ENCODE measurements at regions of chr17 and their contacts with region 1.

Region 1: GRCh38 chr17:18141210-18141803 is 32.8 kb downstream of the MYO15A start:
- DNase-seq: peak in 1 of 2 experiments; percentile 58
- H3K4me3 ChIP-seq: no peak overlapping the region
- H3K27ac ChIP-seq: no peak overlapping the region
- H3K4me1 ChIP-seq: peaks cover 0 to 16% (median 6%) of the 10 kb centered on the region in 4 experiments; a peak in 5 of 7 replicates
- H3K27me3 ChIP-seq: no peaks in the 10 kb centered on the region; a peak in 3 of 7 replicates
- CTCF ChIP-seq: peak in 2 of 3 experiments; percentile 17 to 56; a peak in 3 of 4 replicates
- EP300 ChIP-seq: no peak
- POLR2A ChIP-seq: no peak
- RAD21 ChIP-seq: peak; percentile 50 to 51

Region 2: DNA sequence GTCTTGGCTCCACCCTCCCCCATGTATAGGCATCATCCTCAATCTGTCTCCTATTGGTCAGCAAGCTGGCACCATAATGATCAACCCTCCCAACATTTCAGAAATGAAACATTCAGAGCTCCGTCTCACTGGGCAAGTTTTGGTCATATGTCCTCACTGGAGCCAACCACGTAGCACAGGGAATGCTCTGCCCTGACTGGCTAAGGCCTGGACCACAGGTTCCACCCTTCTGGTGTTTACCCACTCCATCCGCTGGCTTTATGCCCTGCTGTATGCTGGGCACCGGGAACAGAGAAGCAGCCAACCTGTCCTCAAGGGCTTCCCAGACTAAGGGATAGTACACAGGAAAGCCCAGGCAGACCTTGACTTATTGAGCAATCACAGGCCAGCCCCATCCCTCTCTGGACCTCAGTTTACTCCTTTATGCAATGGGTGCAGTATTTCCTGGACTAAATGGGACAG is 12.2 kb before region 1 on chr17:
- CTCF ChIA-PET with region 1: interaction called, 50 read pairs
- POLR2A ChIA-PET with region 1: interaction called, 3 read pairs
- DNase-seq: no peak
- H3K4me3 ChIP-seq: no peak overlapping the region
- H3K27ac ChIP-seq: no peak overlapping the region
- H3K4me1 ChIP-seq: no peaks in the 10 kb centered on the region; a peak in 1 of 7 replicates
- H3K27me3 ChIP-seq: peaks cover 0 to 3% (median 2%) of the 10 kb centered on the region in 4 experiments; a peak in 4 of 7 replicates
- CTCF ChIP-seq: no peak
- EP300 ChIP-seq: no peak
- POLR2A ChIP-seq: no peak
- RAD21 ChIP-seq: no peak

Region 3: DNA sequence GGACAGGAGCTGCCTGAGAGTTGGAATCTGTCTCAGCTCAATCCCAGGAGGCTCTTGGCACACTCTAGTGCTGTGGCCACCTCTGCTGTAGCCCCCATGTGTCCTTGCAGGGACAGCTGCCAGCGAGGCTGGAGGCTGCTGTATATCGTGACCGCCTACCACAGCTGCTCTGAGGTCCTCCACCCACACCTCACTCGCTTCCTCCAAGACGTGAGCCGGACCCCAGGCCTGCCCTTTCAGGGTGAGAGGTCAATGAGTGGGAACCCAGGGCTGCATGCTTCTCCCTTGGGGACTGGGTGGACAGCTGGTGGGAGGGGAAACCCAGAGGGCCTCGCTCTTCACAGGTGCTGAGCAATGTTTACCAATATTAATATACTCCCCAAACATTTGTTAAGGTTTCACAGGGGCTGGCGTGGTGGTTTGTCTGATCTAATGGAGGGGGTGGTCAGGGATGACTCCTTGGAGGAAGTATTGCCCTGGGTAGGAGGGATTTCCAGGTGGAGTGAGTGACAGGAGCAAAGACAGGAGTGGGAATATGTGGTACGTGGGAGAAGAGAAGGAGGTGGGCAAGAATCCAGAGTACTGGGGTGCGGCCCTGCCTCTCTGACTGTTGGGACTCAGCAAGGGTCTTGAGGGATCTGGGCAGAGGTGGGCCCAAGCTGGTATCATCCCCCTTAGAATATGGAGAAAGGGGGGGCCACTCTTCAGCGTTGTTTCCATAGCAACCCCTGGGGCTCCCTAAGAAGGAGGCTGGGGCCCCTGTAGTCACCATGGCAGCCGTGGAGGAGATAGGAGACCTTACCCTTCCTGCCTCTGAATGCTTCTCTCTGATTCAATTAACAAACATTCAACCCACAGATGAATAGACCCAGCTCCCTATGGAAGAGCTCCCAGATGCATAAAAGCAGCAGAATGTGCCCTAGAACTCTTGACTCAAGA is 20.2 kb after region 1 on chr17:
- CTCF ChIA-PET with region 1: interaction called, 141 read pairs
- POLR2A ChIA-PET with region 1: no interaction called
- DNase-seq: no peak
- H3K4me3 ChIP-seq: no peak overlapping the region
- H3K27ac ChIP-seq: no peak overlapping the region
- H3K4me1 ChIP-seq: peaks cover 2 to 5% (median 3%) of the 10 kb centered on the region in 4 experiments; a peak in 6 of 7 replicates
- H3K27me3 ChIP-seq: no peaks in the 10 kb centered on the region; a peak in 1 of 7 replicates
- CTCF ChIP-seq: no peak
- EP300 ChIP-seq: no peak
- POLR2A ChIP-seq: no peak
- RAD21 ChIP-seq: no peak

Region 4: GRCh38 chr17:18176176-18176575 is 34.9 kb after region 1 on chr17:
- CTCF ChIA-PET with region 1: interaction called, 53 read pairs
- POLR2A ChIA-PET with region 1: interaction called, 3 read pairs
- DNase-seq: no peak
- H3K4me3 ChIP-seq: no peak overlapping the region
- H3K27ac ChIP-seq: no peak overlapping the region
- H3K4me1 ChIP-seq: no peaks in the 10 kb centered on the region; a peak in 1 of 7 replicates
- H3K27me3 ChIP-seq: no peaks in the 10 kb centered on the region; a peak in 1 of 7 replicates
- CTCF ChIP-seq: no peak
- EP300 ChIP-seq: no peak
- POLR2A ChIP-seq: no peak
- RAD21 ChIP-seq: no peak

Region 5: GRCh38 chr17:18203308-18203707 is 62.0 kb after region 1 on chr17:
- CTCF ChIA-PET with region 1: interaction called, 99 read pairs
- POLR2A ChIA-PET with region 1: interaction called, 3 read pairs
- DNase-seq: no peak
- H3K4me3 ChIP-seq: no peak overlapping the region
- H3K27ac ChIP-seq: 0 out of 2 replicates have a peak overlapping the region, but pooled peaks have one; percentile 32
- H3K4me1 ChIP-seq: peaks cover 0 to 8% (median 5%) of the 10 kb centered on the region in 4 experiments; a peak in 5 of 7 replicates
- H3K27me3 ChIP-seq: no peaks in the 10 kb centered on the region
- CTCF ChIP-seq: no peak
- EP300 ChIP-seq: no peak
- POLR2A ChIP-seq: no peak
- RAD21 ChIP-seq: no peak

Measured in H1 (cell line).